Astrocyte of the cerebellum (primary cell): ENCODE measurements at regions of chr7 and their contacts with region 1.

Region 1: DNA sequence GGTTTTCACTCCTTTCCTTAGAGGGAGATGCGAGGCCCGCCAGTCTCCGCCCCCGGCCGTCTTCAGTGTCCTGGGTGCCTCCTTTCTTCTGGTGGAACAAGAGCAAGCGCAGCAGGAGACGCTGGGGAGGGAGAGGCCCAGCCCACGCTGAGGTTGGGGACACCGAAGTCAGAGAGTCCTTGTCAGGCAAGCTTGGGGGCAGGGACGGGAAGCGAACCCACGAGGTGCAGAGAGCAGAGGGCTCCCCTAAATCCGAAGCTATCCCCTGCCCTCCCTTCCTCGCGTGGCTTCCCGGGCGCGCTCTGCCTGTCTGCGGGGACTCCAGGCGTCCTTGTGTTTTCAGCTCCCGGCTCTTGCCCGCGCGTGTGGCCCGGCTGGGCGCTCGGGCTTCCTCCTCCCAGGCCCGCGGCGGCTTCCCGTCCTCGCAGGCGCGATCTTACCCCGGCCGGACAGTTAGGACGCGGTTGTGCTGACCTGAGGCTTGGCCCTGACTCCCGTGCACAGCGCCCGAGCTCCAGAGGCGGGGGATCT is 60.6 kb upstream of the UBE3C start:
- DNase-seq: no peak
- H3K4me3 ChIP-seq: peak overlapping the region; percentile 16
- CTCF ChIP-seq: no peak

Region 2: DNA sequence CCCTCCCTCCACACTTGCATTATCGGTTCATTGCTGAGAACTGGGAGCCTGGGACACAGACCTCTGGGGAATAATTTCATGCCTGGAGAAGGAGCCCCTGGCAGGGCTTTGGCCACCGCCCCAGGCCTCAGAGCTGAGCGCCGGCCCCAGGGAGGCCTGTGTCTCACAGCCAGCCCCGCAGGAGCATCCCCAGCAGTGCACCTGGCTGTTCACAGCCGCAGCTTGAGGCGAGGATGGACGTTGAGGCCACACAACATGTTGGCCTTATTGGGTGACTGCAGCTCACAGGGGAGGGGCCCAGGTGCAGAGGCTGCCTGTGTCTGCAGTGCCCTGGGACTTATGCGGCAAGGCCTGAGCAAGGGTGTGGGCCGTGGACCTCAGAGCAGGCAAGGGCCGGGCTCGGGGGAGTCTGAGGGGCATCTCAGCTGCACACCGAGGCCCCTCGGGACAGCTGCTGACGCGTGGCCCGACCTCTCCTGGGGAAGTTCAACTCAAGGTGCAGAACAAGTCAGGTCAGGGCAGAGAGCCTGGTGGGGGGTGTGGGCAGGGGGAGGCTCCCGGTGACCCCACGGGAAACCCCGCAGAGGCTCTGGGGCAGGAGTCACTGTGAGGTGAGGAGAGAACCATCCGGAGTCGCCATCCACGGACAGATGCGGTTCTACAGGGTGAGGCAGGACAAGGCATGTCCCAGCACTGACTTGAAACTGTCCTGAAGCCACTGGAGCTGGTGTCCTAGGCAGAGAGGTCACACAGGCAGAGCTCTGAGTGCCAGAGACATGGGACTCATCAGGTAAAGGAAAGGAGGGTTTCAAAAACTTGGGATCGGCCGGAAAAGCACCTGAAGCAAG is 47.5 kb after region 1 on chr7:
- in situ Hi-C with region 1: loop called (anchors 5 kb)
- DNase-seq: no peak
- H3K4me3 ChIP-seq: no peak overlapping the region
- CTCF ChIP-seq: no peak